ENCODE measurements at regions of chr2 and their contacts with region 1.

Region 1: GRCh38 chr2:179264368-179265081 is at the start of gene SESTD1:
- DNase-seq: peak; percentile 76 to 85
- H3K4me3 ChIP-seq: peak within 1 kb of the TSS; percentile 85
- H3K4me3 Mint-ChIP-seq: peak within 1 kb of the TSS; percentile 95
- H3K27ac Mint-ChIP-seq: peak within 1 kb of the TSS; percentile 71
- H3K4me1 ChIP-seq: peaks cover 23% of the 10 kb centered on the region
- H3K4me1 Mint-ChIP-seq: peaks cover 31% of the 10 kb centered on the region
- H3K27me3 ChIP-seq: no peaks in the 10 kb centered on the region
- H3K27me3 Mint-ChIP-seq: no peaks in the 10 kb centered on the region
- CTCF ChIP-seq: no peak
- total RNA-seq, gene SESTD1: 44.7 and 50.2 TPM in 2 replicates

Region 2: DNA sequence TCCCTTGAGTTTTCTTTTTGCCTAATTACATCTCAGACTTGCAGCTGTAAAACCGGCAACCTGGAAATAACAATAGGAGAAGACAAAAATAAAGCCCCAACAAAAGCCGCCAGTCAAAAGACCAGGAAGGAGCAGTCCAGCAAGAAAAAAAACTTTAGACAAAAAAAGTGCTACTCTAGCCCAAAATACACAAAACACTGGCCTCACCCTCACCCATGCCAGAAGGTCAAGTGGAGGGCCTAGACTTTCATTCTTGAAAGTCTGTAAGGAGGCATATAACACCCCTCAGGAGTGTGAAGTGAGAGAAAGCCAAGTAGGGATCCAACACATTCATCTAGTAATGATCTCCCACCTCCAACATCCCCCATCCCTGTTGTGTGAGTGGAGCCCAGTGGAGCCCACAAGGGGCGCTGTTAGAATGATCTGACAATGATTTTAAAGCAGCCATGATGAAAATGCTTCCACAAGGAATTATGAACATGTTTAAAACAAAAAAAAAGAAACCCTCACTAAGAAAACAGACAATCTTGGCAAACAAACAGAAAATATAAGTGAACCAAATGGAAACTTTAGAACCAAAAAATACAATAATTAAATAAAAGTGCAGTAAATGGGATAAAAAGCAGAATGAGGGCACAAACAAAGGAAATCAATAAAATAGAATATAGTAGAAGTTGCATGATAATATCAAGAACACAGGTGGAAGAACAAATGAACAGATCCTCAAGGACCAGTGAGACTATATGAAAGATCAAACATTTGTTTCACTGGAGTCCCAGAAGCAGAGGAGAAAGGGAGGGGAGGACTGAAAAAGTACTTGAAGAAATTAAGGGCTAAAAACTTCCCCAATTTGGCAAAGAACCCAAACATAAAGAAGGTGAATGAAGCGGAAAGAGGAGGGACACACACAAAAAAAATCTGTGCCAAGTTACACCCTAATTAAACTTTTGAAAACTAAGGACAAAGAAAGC is 23.8 kb before region 1 on chr2:
- CTCF ChIA-PET with region 1: no interaction called
- POLR2A ChIA-PET with region 1: no interaction called
- intact Hi-C with region 1: loop called (anchors 2 kb)
- DNase-seq: no peak
- H3K4me3 ChIP-seq: no peak overlapping the region
- H3K4me3 Mint-ChIP-seq: no peak overlapping the region
- H3K27ac Mint-ChIP-seq: peak overlapping the region; percentile 34
- H3K4me1 ChIP-seq: 0 out of 2 replicates have a peak, but pooled peaks cover 19% of the 10 kb centered on the region
- H3K4me1 Mint-ChIP-seq: peaks cover 16% of the 10 kb centered on the region
- H3K27me3 ChIP-seq: no peaks in the 10 kb centered on the region
- H3K27me3 Mint-ChIP-seq: no peaks in the 10 kb centered on the region
- CTCF ChIP-seq: peak in 1 of 2 experiments; percentile 13

Region 3: GRCh38 chr2:179253226-179253625 is 11.3 kb before region 1 on chr2:
- CTCF ChIA-PET with region 1: no interaction called
- POLR2A ChIA-PET with region 1: no interaction called
- intact Hi-C with region 1: no loop called
- DNase-seq: no peak
- H3K4me3 ChIP-seq: no peak overlapping the region
- H3K4me3 Mint-ChIP-seq: no peak overlapping the region
- H3K27ac Mint-ChIP-seq: no peak overlapping the region
- H3K4me1 ChIP-seq: no peaks in the 10 kb centered on the region
- H3K4me1 Mint-ChIP-seq: no peaks in the 10 kb centered on the region
- H3K27me3 ChIP-seq: no peaks in the 10 kb centered on the region
- H3K27me3 Mint-ChIP-seq: no peaks in the 10 kb centered on the region
- CTCF ChIP-seq: no peak

Region 4: GRCh38 chr2:179340668-179341067 is 76.1 kb after region 1 on chr2:
- CTCF ChIA-PET with region 1: no interaction called
- POLR2A ChIA-PET with region 1: no interaction called
- intact Hi-C with region 1: loop called (anchors 1 kb)
- DNase-seq: peak in 1 of 2 experiments; percentile 30
- H3K4me3 ChIP-seq: no peak overlapping the region
- H3K4me3 Mint-ChIP-seq: no peak overlapping the region
- H3K27ac Mint-ChIP-seq: no peak overlapping the region
- H3K4me1 ChIP-seq: peaks cover 13% of the 10 kb centered on the region
- H3K4me1 Mint-ChIP-seq: peaks cover 14% of the 10 kb centered on the region
- H3K27me3 ChIP-seq: no peaks in the 10 kb centered on the region
- H3K27me3 Mint-ChIP-seq: no peaks in the 10 kb centered on the region
- CTCF ChIP-seq: peak; percentile 34 to 48

Region 5: GRCh38 chr2:179376881-179377280 is 112.4 kb after region 1 on chr2:
- CTCF ChIA-PET with region 1: no interaction called
- POLR2A ChIA-PET with region 1: no interaction called
- intact Hi-C with region 1: no loop called
- DNase-seq: no peak
- H3K4me3 ChIP-seq: no peak overlapping the region
- H3K4me3 Mint-ChIP-seq: no peak overlapping the region
- H3K27ac Mint-ChIP-seq: no peak overlapping the region
- H3K4me1 ChIP-seq: no peaks in the 10 kb centered on the region
- H3K4me1 Mint-ChIP-seq: no peaks in the 10 kb centered on the region
- H3K27me3 ChIP-seq: no peaks in the 10 kb centered on the region
- H3K27me3 Mint-ChIP-seq: peaks cover 15% of the 10 kb centered on the region
- CTCF ChIP-seq: no peak

Region 6: DNA sequence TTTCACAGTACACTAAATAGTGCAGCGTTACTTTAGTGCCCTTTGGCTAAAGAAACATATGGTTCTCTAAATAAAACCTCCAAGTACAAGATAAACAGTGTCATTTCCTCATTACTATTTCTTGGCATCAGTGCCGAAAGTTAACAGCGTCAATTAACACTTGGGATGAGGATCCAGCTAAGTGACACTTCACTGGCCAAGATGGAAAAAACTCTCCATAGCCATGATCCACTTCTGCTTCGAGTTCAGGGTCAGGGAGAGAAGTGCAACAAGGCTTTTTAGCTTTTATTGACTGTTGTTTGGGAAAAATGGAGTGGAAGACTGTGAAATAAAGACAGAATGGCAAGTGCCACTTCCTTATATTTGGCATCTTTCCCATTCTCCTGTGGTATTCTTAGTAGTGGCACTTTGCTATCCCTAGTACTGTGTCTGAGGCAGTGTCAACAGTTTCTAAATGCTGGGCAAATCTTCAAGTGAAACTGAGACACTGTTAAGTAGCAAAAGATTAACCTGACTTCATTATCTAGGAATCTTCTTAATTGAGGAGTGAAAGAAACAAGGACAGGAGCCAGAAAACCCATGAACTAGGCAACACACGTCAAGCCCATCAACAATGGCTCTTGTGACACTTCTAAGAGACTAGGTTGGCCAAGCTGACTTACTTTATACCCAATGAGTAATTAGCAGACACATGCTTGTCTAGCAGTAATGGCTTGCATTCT is 222.6 kb after region 1 on chr2:
- CTCF ChIA-PET with region 1: no interaction called
- POLR2A ChIA-PET with region 1: no interaction called
- intact Hi-C with region 1: no loop called
- DNase-seq: no peak
- H3K4me3 ChIP-seq: no peak overlapping the region
- H3K4me3 Mint-ChIP-seq: no peak overlapping the region
- H3K27ac Mint-ChIP-seq: no peak overlapping the region
- H3K4me1 ChIP-seq: no peaks in the 10 kb centered on the region
- H3K4me1 Mint-ChIP-seq: no peaks in the 10 kb centered on the region
- H3K27me3 ChIP-seq: no peaks in the 10 kb centered on the region
- H3K27me3 Mint-ChIP-seq: no peaks in the 10 kb centered on the region
- CTCF ChIP-seq: no peak